ENCODE measurements at regions of chr18 and their contacts with region 1.

Region 1: DNA sequence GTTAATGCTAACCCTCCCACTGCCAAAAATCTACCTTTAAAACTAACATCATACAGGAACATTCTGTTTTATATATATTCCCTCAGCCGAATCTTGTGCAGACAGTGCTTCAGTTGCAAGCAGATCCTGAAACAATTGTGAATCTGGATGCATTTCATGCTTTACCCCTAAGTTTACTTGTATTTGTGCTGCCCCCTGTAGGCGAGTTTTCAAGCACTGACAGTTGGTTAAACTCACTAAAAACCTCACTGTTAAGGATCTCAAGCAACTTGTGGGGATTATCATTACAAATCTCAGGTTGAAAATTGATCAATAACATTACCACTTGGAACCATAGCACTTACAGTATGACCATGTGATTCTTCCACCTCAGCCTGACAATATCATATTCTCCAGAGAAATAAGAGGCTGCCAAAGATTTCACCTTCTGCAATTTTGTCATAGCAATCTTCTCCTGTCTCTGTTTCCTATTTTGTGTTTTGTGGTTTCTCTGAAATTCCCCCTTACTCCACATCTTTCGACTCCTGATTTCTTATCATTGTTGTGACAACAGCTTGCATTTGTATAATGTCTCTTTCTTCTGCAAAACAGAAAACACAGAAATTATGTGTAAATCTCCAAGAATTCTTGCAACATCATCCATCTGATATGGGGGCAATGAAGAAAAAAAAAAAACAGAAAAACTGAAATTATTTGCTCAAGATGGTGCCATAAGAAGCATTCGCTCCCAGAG is 354.6 kb upstream of the SETBP1 start:
- DNase-seq: peak; percentile 66
- ATAC-seq: peak in 1 of 2 donors; percentile 38

Region 2: GRCh38 chr18:43793910-43794309 is 532.2 kb before region 1 on chr18:
- intact Hi-C with region 1: loop called (anchors 5 kb)
- DNase-seq: no peak
- ATAC-seq: peak; percentile 59 to 68

Region 3: DNA sequence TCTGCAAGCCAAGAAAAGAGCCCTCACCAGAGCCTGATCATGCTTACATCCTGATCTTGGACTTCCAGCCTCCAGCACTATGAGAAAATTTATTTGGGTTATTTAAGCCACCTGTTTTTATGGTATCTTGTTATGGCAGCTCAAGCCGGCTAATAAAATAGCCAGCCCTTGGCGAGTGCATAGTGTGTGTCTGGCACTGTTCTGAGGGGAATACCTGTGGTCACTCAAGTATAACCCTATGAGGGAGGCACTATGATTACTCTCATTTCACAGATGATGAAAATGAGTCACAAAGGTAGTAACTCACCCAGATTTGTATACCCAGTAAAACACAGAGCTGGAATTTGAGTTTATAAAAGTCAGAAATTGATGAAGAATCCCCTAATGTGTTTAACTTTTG is 202.3 kb before region 1 on chr18:
- intact Hi-C with region 1: loop called in 1 of 2 experiments (anchors 10 kb)
- DNase-seq: no peak
- ATAC-seq: no peak

Region 4: DNA sequence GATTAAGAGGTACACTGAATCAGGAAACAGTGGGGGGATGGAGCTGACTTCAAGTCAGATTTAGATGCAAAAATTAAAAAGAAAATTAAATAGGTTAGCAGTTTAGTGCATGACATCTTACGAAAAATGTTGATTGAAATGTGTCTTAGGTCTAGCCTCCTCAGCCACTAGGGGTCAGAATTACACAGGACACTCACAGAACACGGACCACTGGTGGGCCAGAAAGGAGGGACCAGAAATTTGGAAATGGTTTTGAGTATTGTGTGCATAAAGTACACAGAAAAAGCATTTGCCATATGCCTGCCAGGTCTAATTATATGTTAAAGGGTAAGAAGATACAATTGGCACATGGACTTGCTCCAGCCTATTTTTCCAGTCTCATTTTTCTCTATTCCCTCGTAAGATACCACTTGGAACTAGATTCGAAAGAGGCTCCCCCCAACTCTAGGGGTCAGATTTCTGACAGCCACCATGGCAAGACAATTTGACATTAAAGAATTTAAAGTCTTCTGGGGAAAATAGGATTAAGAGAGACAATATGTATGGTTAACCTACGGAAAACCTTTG is 195.6 kb before region 1 on chr18:
- intact Hi-C with region 1: loop called (anchors 5 to 10 kb)
- DNase-seq: peak; percentile 23
- ATAC-seq: peak in 1 of 2 donors; percentile 57

Region 5: DNA sequence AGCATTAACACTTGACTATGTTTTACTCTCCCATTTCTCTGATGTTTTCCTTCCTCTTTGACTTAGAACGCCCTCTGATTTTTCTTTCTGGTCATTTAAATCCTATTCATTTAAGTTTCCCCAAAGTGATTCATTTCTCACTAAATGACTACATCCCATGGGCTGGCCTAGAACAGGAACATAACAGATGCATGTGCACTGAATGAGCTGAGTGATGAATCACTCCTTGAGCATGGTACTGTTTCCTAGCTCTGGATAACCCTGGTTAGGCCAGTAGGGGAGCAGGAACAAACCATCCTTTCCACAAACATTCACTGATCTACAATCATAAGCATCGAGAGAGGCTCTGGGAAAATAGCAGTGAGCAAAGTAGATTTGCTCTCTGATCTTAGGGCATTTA is 132.7 kb after region 1 on chr18:
- intact Hi-C with region 1: no loop called
- DNase-seq: no peak
- ATAC-seq: peak in 1 of 2 donors; percentile 47